Right ventricle myocardium inferior (tissue), 1 donor: ENCODE measurements at regions of chr6 and their contacts with region 1.

Region 1: DNA sequence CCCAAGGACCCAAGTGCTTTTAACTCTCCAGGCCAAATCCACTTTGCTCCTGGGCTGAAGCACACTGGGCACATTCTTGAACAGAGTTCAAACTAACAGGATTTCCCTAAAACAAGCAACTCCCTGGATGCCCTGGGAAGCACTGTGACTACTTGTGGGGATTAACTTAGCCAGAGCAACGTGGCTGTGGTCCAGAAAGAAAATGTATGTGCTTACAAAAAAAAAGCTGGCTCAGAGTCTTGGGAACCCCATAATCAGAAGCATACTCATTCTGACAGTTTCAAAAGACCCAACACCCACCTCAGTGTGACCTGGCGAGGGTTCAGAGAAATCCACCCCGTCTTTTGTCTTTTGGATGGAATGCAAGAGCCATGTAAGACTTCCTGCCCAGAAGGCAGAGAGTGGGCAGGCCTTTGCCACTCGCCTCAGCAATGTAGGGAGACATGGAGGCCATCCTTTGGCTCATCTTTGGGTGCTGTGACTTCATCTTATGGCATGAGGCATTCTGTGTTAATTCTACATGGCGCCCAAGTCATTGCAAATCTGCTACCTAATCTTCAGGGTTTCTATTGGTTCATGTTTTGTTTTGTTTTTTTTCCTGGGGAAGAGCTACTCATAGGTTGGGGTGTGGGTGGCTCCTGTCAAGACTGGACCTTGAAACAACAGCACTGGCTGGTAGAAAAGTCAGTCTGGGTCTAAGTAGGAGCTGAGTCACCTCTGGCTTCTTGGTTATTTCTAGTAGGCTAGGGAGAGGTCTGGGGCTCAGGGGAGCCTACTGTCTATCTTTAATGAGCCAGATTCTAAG is 248.6 kb upstream of the SUPT3H start:
- DNase-seq: no peak
- ATAC-seq: no peak

Region 2: DNA sequence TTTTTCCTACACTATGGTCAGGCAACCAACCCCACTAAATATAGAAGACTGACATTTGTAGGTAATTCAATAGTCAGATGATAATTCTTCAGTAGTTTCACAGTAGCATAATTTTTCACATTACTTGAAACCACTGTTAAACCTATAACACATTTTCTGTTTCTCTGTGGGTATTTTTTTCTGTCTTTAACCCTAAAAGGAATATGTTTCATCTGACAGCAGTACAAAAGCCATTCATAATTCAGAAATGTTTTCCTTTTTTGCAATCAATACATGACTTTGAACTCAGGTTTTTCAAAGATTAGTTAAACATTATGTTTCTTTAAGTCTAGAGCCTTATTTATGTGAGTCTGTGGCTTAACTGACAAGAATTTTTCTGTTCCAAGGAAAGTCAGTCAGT is 426.7 kb before region 1 on chr6:
- intact Hi-C with region 1: no loop called
- DNase-seq: no peak
- ATAC-seq: no peak

Region 3: DNA sequence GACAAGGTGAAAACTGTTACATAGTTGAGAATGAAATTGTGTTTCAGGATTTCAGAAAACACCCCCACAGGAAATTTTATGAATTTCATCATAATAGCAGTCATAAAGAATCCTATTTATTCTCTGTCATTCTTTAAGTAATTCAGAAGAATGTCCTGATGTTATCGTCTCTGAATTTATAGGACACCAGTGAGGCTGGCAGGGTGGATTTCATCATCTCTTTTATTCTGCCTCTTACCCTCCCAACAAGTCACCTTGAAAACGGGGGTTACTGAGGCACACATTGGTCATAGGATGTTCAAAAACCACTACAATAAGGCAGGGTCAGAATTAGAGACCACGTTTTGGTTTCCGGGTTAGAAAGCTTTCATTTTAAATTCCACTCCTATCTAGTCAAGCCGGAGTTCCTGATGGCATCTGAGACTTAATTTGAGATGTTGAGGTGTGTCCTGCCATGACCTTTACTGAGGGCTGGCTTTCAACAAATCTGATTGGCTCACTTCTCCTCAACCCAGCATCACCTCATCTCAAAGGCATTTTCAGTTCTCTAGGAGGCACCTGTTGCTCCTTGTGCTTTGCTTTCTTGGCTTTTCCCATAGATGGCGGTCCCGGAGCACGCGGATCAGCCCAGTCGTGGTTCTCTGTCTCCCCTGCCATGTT is 17.9 kb before region 1 on chr6:
- intact Hi-C with region 1: loop called (anchors 1 kb)
- DNase-seq: no peak
- ATAC-seq: no peak